Thyroid gland (tissue), 4 donors: ENCODE measurements at regions of chr9 and their contacts with region 1.

Region 1: DNA sequence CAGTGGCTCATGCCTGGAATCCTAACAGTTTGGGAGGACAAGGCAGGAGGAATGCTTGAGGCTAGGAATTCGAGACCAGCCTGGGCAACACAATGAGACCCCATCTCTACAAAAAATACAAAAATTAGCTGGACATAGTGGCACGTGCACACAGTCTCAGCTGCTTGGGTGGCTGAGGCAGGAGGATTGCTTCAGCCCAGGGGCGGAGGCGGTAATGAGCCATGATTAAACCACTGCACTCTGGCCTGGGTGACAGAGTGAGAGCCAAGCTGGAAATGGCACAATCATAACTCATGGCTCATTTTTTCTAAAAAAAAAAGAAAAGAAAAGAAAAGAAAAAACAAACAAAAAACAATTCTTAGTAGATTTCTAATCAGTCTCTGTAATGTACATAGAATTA is 446.2 kb downstream of the ELAVL2 start:
- DNase-seq: no peak
- H3K4me3 ChIP-seq: no peak overlapping the region
- H3K27ac ChIP-seq: no peak overlapping the region
- H3K4me1 ChIP-seq: no peaks in the 10 kb centered on the region
- H3K27me3 ChIP-seq: no peaks in the 10 kb centered on the region
- CTCF ChIP-seq: no peak
- POLR2A ChIP-seq: no peak

Region 2: DNA sequence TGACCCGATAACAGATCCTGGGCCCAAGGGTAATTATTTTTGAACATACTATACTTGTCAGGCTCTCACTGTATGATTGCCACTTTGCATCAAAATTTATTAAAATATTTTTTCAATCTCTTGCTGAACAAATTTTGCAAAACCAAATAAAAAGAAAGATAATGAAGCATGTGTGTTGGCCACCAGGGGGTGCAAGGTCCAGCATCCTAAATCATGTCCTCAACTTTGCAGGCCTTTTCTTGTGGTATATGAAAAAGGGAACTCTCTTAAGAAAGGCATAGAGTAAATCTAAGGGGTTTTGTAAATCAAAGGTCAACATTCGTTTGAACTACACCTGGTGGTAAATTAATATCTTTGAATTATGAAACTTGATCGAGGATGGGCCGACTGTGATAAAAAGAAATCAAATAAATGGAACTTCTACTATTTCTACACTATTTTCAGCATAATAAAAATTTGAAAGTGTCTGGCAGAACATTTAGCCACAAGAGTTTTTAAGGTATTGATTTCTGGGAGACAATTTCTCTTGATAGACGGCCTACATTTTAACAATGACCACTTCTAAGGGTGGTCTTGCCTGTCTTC is 256.7 kb before region 1 on chr9:
- intact Hi-C with region 1: no loop called
- DNase-seq: peak; percentile 13 to 23
- H3K4me3 ChIP-seq: no peak overlapping the region
- H3K27ac ChIP-seq: no peak overlapping the region
- H3K4me1 ChIP-seq: no peaks in the 10 kb centered on the region
- H3K27me3 ChIP-seq: no peaks in the 10 kb centered on the region
- CTCF ChIP-seq: peak in 3 of 6 experiments; percentile 25 to 54 (median 46)
- POLR2A ChIP-seq: no peak

Region 3: GRCh38 chr9:23215688-23216087 is 164.2 kb before region 1 on chr9:
- intact Hi-C with region 1: no loop called
- DNase-seq: no peak
- H3K4me3 ChIP-seq: no peak overlapping the region
- H3K27ac ChIP-seq: no peak overlapping the region
- H3K4me1 ChIP-seq: no peaks in the 10 kb centered on the region
- H3K27me3 ChIP-seq: no peaks in the 10 kb centered on the region
- CTCF ChIP-seq: no peak
- POLR2A ChIP-seq: no peak

Region 4: GRCh38 chr9:23342291-23342690 is 37.6 kb before region 1 on chr9:
- intact Hi-C with region 1: loop called (anchors 5 kb)
- DNase-seq: no peak
- H3K4me3 ChIP-seq: no peak overlapping the region
- H3K27ac ChIP-seq: no peak overlapping the region
- H3K4me1 ChIP-seq: no peaks in the 10 kb centered on the region
- H3K27me3 ChIP-seq: no peaks in the 10 kb centered on the region
- CTCF ChIP-seq: no peak
- POLR2A ChIP-seq: no peak

Region 5: DNA sequence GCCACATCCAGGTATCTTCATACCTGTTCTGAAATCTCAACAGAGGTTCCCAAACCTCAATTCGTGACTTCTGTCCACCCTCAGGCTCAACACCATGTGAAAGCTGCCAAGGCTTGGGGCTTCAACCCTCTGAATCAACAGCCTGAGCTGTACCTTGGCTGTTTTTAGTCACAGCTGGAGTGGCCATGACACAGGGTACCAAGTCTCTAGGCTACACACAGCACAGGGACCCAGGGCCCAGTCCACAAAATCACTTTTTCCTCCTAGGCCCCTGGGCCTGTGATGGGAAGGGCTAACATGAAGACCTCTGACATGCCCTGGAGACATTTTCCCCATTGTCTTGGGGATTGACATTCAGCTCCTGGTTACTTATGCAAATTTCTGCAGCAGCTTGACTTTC is 18.7 kb before region 1 on chr9:
- intact Hi-C with region 1: loop called (anchors 2 kb)
- DNase-seq: no peak
- H3K4me3 ChIP-seq: no peak overlapping the region
- H3K27ac ChIP-seq: no peak overlapping the region
- H3K4me1 ChIP-seq: no peaks in the 10 kb centered on the region
- H3K27me3 ChIP-seq: no peaks in the 10 kb centered on the region
- CTCF ChIP-seq: no peak
- POLR2A ChIP-seq: no peak

Region 6: DNA sequence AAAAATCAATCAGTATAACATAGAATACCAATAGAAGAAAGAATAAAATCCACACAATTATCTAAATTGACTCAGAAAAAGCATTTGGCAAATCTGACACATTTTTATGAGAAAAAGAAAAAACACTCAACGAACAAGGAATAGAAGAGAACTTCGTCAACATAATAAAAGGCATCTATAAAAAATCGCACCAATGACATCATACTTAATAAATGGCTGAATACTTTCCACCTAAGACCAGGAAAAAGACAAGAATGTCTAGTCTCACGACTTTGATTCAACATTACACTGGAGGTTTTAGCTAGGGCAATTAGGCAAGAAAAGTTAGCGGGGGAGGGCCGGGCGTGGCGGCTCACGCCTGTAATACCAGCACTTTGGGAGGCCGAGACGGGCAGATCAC is 89.3 kb after region 1 on chr9:
- intact Hi-C with region 1: no loop called
- DNase-seq: no peak
- H3K4me3 ChIP-seq: no peak overlapping the region
- H3K27ac ChIP-seq: no peak overlapping the region
- H3K4me1 ChIP-seq: no peaks in the 10 kb centered on the region
- H3K27me3 ChIP-seq: no peaks in the 10 kb centered on the region
- CTCF ChIP-seq: no peak
- POLR2A ChIP-seq: no peak